HAP-1 (cell line): ENCODE measurements at regions of chr20 and their contacts with region 1.

Region 1: GRCh38 chr20:57596998-57597939 is 23.0 kb downstream of the ZBP1 start:
- DNase-seq: peak; percentile 36 to 84
- H3K4me3 ChIP-seq: peak overlapping the region; percentile 7; the same call in 1 of the 2 replicates
- H3K4me1 ChIP-seq: no peaks in the 10 kb centered on the region
- H3K27me3 ChIP-seq: no peaks in the 10 kb centered on the region

Region 2: GRCh38 chr20:57089691-57090150 is 507.5 kb before region 1 on chr20:
- in situ Hi-C with region 1: loop called (anchors 10 kb)
- DNase-seq: peak; percentile 25 to 89
- H3K4me3 ChIP-seq: no peak overlapping the region
- H3K4me1 ChIP-seq: no peaks in the 10 kb centered on the region; the same call in 1 of the 2 replicates
- H3K27me3 ChIP-seq: peaks cover 3% of the 10 kb centered on the region; the same call in 1 of the 2 replicates

Region 3: DNA sequence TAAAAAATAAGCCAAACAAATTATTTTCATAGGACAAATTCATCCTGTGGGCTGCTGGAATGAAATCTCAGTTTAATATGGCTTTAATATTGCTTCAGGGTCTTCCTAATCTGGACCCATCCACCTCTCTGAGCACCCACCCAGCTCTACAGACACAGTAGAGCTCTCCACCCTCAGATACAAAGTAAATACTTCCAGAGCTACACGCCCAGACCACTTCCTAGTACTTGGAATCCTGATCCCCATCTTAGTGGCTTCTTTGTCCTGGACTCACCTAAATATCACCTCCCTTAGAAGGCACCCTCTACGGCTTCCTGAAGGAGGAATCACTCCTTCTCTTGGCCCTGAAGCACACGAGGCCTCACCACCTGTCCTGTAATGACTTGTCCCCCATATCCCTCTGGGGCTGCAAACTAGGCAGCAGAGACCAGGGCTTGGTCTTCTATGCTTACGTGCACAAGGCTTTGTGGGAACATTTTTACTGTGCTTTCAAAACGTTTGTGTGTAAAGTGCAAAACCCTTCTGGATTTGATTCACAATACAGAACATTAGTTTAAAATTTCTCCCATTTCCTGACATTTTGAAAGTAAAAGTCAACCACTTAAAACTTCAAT is 74.8 kb before region 1 on chr20:
- in situ Hi-C with region 1: loop called (anchors 5 kb)
- DNase-seq: peak in 1 of 2 experiments; percentile 43
- H3K4me3 ChIP-seq: no peak overlapping the region
- H3K4me1 ChIP-seq: peaks cover 17% of the 10 kb centered on the region
- H3K27me3 ChIP-seq: no peaks in the 10 kb centered on the region

Region 4: DNA sequence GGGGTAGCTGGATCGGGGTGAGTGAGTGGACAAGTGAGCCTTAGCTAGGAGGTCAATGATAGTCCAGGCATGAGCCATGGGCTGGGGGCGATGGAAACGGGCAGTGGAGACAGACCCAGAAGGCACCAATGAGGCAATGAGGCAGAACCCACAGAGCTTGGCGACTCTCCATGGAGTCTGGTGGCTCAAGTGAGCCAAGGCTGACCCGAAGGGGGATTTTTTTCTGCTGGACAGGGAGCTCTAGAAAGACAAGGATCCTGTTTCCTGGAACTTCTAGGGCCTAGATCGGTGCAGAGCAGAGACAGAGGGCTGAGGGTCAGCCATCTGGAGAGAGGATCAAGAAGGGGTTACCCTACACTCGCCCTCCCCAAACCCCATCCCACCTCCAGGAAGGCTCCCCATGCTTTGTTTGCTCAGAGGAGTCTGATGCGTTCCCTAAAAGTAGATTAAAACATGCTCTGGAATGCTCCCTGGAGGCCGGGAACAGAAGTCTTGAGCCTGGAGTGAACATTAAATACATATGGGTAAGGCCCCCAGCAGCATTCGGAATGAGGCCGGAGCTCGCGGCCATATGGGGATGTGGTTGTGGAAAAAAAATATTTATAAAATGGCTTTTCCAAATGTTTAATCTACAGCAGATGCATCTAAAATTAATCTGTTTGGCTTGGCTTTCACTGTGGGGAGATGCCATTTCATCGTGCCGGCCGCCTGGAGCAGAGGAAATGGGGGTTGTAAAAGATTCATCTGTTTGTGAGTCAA is 350.3 kb after region 1 on chr20:
- in situ Hi-C with region 1: no loop called
- DNase-seq: no peak
- H3K4me3 ChIP-seq: no peak overlapping the region
- H3K4me1 ChIP-seq: no peaks in the 10 kb centered on the region
- H3K27me3 ChIP-seq: no peaks in the 10 kb centered on the region

Region 5: GRCh38 chr20:58014628-58015315 is 417.5 kb after region 1 on chr20:
- in situ Hi-C with region 1: no loop called
- DNase-seq: no peak
- H3K4me3 ChIP-seq: no peak overlapping the region
- H3K4me1 ChIP-seq: no peaks in the 10 kb centered on the region
- H3K27me3 ChIP-seq: no peaks in the 10 kb centered on the region

Region 6: DNA sequence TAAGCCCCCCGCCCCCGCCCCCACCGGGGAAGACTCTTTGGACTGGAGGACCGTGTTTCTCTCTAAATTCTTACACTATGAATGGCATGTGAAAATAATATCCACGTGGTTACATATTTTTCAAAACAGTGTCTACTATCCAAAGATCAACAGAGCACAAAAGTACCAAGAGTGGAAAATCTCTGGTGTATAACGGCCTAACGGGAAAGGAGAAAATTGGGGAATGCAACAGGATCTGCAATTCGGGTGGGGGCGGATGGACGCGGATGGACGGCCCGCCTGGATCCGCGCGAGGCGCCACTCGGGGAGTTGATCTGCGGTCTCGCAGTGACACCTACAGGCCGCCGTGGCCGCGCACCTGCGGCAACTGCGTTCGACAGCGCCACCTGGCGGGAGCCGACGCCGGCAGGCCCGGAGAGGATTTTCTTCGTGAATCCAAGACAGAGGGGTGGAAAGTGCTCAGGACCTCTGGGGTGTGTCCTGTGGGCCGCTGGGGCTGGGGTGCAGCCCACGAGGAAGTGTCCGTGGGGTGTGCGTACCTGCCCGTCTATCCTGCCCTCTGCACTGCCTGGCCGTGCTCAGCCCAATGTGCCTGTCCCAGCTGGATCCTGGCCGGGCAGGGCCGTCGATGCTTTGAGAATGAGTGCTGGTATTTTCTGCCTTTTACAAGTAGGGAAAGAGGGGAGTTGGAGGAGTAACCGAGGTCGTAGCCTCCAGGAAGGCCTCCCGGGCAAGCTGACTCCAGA is 612.6 kb after region 1 on chr20:
- in situ Hi-C with region 1: loop called (anchors 5 kb)
- DNase-seq: peak; percentile 51 to 90
- H3K4me3 ChIP-seq: no peak overlapping the region
- H3K4me1 ChIP-seq: no peaks in the 10 kb centered on the region
- H3K27me3 ChIP-seq: peaks cover 5% of the 10 kb centered on the region; the same call in 1 of the 2 replicates